ENCODE measurements at regions of chr17 and their contacts with region 1.

Region 1: GRCh38 chr17:16589097-16589969 is 20.3 kb upstream of the ZNF287 start:
- DNase-seq: peak; percentile 75
- ATAC-seq: peak; percentile 88
- H3K4me3 ChIP-seq: peak overlapping the region; percentile 49 to 72 (median 51); a peak in 5 of 6 replicates
- H3K27ac ChIP-seq: no peak overlapping the region
- H3K4me1 ChIP-seq: peaks cover 22% of the 10 kb centered on the region
- H3K27me3 ChIP-seq: peaks cover 0 to 21% of the 10 kb centered on the region in 2 experiments; a peak in 4 of 5 replicates
- CTCF ChIP-seq: peak; percentile 95
- EP300 ChIP-seq: no peak
- POLR2A ChIP-seq: peak in 1 of 2 experiments; percentile 60; a peak in 2 of 4 replicates
- RAD21 ChIP-seq: peak; percentile 66; the same call in 1 of the 2 replicates

Region 2: DNA sequence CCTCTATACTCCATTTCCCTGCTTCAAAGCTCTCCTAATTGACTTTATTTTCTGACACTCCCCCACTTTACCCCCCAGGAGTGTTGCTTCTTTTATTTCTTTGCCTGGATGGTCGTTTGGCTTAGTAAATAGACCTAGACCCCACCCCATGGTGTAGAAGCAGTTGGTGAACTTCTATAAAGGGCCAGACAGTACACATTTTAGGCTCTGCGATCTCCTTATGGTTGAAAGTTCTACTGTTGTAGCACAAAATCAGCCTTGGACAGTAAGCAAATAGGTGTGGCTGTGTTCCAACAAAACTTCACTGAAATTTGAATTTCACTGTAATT is 52.2 kb before region 1 on chr17:
- CTCF ChIA-PET with region 1: interaction called, 11 read pairs
- POLR2A ChIA-PET with region 1: interaction called, 4 read pairs
- in situ Hi-C with region 1: no loop called
- intact Hi-C with region 1: loop called (anchors 1 kb)
- DNase-seq: no peak
- ATAC-seq: no peak
- H3K4me3 ChIP-seq: peak overlapping the region in 1 of 3 experiments; percentile 86; a peak in 2 of 6 replicates
- H3K27ac ChIP-seq: no peak overlapping the region
- H3K4me1 ChIP-seq: peaks cover 11% of the 10 kb centered on the region
- H3K27me3 ChIP-seq: no peaks in the 10 kb centered on the region
- CTCF ChIP-seq: no peak
- EP300 ChIP-seq: no peak
- POLR2A ChIP-seq: no peak
- RAD21 ChIP-seq: no peak

Region 3: DNA sequence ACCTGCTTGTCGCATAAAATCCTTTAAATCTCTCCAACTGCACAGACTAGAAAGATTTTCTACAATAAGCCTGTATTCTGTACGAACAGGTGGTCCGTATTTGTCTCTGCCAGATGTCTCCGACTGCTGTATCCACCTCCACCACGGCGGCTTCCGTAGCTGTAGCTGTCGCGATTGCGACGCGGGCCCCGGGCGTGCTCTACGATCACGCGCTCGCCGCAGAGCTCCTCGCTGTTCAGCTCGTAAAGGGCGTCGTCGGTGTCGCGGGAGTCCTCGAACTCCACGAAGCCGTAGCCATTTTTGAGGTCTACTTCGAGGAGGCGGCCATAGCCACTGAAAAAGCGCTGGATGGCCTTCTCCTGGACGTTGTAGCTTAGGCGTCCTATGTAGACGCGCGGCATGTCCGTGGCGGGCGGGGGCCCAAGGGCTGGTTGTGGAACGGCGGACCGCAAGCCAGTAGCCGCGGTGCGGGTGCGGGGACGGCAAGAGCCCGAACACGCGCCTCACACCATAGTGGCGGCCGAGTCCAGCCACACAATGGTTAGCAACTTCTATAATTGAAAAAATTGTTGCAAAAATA is 28.2 kb after region 1 on chr17:
- CTCF ChIA-PET with region 1: no interaction called
- POLR2A ChIA-PET with region 1: no interaction called
- in situ Hi-C with region 1: no loop called
- intact Hi-C with region 1: no loop called
- DNase-seq: no peak
- ATAC-seq: no peak
- H3K4me3 ChIP-seq: no peak overlapping the region
- H3K27ac ChIP-seq: no peak overlapping the region
- H3K4me1 ChIP-seq: no peaks in the 10 kb centered on the region
- H3K27me3 ChIP-seq: no peaks in the 10 kb centered on the region
- CTCF ChIP-seq: no peak
- EP300 ChIP-seq: no peak
- POLR2A ChIP-seq: no peak
- RAD21 ChIP-seq: no peak

Measured in HepG2 (cell line).